ENCODE measurements at regions of chr11 and their contacts with region 1.

Region 1: GRCh38 chr11:72080256-72080974 is at the starts of genes LRRC51 and NUMA1:
- DNase-seq: peak; percentile 100
- H3K4me3 Mint-ChIP-seq: peak within 1 kb of the TSS; percentile 96
- H3K27ac Mint-ChIP-seq: peak within 1 kb of the TSS; percentile 94
- H3K4me1 Mint-ChIP-seq: peaks cover 46% of the 10 kb centered on the region
- H3K27me3 Mint-ChIP-seq: no peaks in the 10 kb centered on the region
- total RNA-seq, gene LRRC51: 7.0 and 7.1 TPM in 2 replicates
- total RNA-seq, gene NUMA1: 138 and 149 TPM in 2 replicates

Region 2: GRCh38 chr11:71787098-71787823 is 293.2 kb before region 1 on chr11:
- intact Hi-C with region 1: loop called (anchors 2 kb)
- DNase-seq: peak; percentile 98
- H3K4me3 Mint-ChIP-seq: peak overlapping the region; percentile 91
- H3K27ac Mint-ChIP-seq: peak overlapping the region; percentile 91
- H3K4me1 Mint-ChIP-seq: peaks cover 16% of the 10 kb centered on the region
- H3K27me3 Mint-ChIP-seq: no peaks in the 10 kb centered on the region

Region 3: GRCh38 chr11:71977743-71978418 is 102.5 kb before region 1 on chr11:
- intact Hi-C with region 1: loop called (anchors 5 kb)
- DNase-seq: peak; percentile 89
- H3K4me3 Mint-ChIP-seq: no peak overlapping the region
- H3K27ac Mint-ChIP-seq: peak overlapping the region; percentile 62
- H3K4me1 Mint-ChIP-seq: peaks cover 5% of the 10 kb centered on the region
- H3K27me3 Mint-ChIP-seq: no peaks in the 10 kb centered on the region

Region 4: GRCh38 chr11:72040726-72041441 is 39.5 kb before region 1 on chr11:
- intact Hi-C with region 1: loop called (anchors 1 kb)
- DNase-seq: peak; percentile 90
- H3K4me3 Mint-ChIP-seq: no peak overlapping the region
- H3K27ac Mint-ChIP-seq: no peak overlapping the region
- H3K4me1 Mint-ChIP-seq: peaks cover 37% of the 10 kb centered on the region
- H3K27me3 Mint-ChIP-seq: no peaks in the 10 kb centered on the region

Region 5: GRCh38 chr11:72091005-72091691 is 10.7 kb after region 1 on chr11:
- intact Hi-C with region 1: no loop called
- DNase-seq: peak; percentile 91
- H3K4me3 Mint-ChIP-seq: no peak overlapping the region
- H3K27ac Mint-ChIP-seq: no peak overlapping the region
- H3K4me1 Mint-ChIP-seq: peaks cover 10% of the 10 kb centered on the region
- H3K27me3 Mint-ChIP-seq: no peaks in the 10 kb centered on the region

Region 6: DNA sequence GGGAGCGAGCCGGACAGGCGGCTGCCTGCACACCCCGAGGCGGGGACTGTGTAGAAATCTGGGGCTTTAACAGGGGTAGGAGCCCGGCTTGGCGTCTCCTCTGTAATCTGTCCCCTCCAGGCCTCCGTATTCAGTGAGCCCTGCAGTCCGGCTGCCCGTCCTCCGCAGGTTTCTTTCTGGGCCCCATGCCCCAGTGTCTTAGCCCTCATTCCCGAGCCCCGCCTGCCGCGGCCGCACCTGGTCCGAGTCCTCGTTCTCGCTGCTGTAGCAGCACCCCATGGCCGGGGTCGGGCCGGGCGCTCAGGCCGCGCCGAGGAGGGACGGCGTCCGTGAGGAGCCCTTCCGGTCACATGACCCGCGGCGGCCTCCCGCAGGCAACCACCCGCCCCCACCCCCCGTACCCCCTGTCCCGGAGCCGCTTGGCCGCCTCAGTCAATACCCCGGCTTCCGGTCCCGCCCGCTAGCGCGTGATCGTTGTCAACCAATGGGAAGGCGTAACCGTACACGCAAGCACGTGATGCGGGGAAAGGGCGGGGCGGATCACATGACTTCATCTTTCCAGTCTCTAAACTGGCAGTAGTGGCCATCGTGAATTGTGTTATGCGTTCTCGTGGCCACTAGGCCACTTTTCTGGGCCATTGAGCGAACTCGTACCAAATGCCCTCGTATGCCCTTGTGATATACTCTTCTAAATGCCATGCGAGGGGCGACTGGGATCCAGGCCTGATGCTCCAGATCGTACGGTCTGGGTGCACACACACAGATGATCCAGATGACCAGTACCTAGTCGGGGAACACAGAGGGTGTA is 22.7 kb after region 1 on chr11 and contains the start of gene LAMTOR1:
- intact Hi-C with region 1: loop called (anchors 1 kb)
- DNase-seq: peak; percentile 100
- H3K4me3 Mint-ChIP-seq: peak within 1 kb of the TSS; percentile 98
- H3K27ac Mint-ChIP-seq: peak within 1 kb of the TSS; percentile 94
- H3K4me1 Mint-ChIP-seq: peaks cover 38% of the 10 kb centered on the region
- H3K27me3 Mint-ChIP-seq: no peaks in the 10 kb centered on the region
- total RNA-seq, gene LAMTOR1: 78.6 and 81.4 TPM in 2 replicates

Region 7: GRCh38 chr11:72112321-72113219 is 32.2 kb after region 1 on chr11 and contains the start of gene ANAPC15:
- intact Hi-C with region 1: loop called (anchors 1 kb)
- DNase-seq: peak; percentile 100
- H3K4me3 Mint-ChIP-seq: peak within 1 kb of the TSS; percentile 98
- H3K27ac Mint-ChIP-seq: peak within 1 kb of the TSS; percentile 99
- H3K4me1 Mint-ChIP-seq: peaks cover 18% of the 10 kb centered on the region
- H3K27me3 Mint-ChIP-seq: no peaks in the 10 kb centered on the region
- total RNA-seq, gene ANAPC15: 52.1 and 54.9 TPM in 2 replicates